Testis (tissue), 5 donors: ENCODE measurements at regions of chr2 and their contacts with region 1.

Region 1: DNA sequence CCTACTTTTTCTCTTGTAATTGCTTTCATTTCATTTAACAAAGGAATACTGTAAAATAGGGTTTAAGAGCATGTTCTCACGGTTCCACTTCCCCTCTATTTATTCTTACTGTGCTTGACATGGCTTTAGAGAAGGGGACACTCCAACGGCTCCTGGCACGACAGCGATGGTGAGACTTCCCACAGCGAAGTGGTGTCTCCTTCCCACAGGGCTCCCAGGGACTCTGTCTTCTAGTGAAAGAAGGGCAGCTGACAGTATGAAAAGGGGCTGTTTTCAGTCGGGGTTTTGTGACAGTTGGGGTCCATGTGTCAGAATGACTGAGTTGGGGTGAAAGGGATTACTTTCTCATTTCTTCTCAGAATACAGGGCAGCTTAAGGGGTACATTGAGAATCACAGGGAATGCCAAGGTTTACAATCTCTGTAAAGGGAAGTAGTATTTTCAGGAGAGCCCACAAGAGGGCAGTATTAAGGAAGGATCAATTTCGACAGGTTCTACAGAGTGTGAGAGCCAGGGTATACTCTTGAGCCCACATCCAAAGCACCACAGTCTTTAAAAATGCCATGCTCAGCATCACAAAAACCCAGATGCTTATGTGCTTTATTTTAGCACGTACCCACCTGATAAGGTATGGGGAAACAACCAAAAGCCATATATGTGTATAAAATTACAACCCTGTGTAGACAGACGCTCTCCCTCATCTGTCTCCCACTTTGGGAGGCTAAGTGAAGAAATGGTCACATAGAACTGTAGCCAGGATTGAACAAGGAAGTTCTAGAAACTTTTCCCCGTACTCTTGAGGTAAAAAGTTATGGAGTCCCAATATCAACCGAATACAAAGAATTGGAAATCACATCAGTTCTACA is 31.3 kb upstream of the RAPGEF4 start:
- DNase-seq: no peak
- H3K4me3 ChIP-seq: no peak overlapping the region
- H3K27ac ChIP-seq: no peak overlapping the region
- H3K4me1 ChIP-seq: no peaks in the 10 kb centered on the region
- H3K27me3 ChIP-seq: no peaks in the 10 kb centered on the region
- CTCF ChIP-seq: peak in 2 of 3 experiments; percentile 9 to 40
- POLR2A ChIP-seq: no peak

Region 2: DNA sequence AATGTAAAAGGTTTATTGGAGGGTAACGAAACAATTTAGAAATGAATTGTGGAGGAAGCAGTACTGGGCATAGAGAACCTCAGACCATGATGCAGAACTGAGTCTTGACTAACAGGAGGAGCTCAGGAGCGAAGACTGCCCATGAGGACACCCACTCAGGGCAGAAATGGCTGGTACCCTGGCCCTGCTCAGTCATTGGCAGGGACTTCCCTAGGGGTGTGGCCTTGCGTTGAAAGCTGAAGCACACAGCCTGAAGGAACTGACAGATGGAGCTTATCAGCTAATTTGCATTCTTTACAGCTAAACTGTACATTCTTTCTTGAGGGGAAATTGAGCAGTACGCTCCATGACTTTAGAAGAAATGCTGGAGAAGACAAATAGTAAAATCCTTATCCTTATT is 91.3 kb before region 1 on chr2:
- intact Hi-C with region 1: loop called (anchors 10 kb)
- DNase-seq: no peak
- H3K4me3 ChIP-seq: no peak overlapping the region
- H3K27ac ChIP-seq: no peak overlapping the region
- H3K4me1 ChIP-seq: no peaks in the 10 kb centered on the region
- H3K27me3 ChIP-seq: no peaks in the 10 kb centered on the region
- CTCF ChIP-seq: no peak
- POLR2A ChIP-seq: no peak